Activated CD8-positive, alpha-beta T cell treated with anti-CD3 and anti-CD28 coated beads for 36 hours (primary cell): ENCODE measurements at regions of chr20 and their contacts with region 1.

Region 1: DNA sequence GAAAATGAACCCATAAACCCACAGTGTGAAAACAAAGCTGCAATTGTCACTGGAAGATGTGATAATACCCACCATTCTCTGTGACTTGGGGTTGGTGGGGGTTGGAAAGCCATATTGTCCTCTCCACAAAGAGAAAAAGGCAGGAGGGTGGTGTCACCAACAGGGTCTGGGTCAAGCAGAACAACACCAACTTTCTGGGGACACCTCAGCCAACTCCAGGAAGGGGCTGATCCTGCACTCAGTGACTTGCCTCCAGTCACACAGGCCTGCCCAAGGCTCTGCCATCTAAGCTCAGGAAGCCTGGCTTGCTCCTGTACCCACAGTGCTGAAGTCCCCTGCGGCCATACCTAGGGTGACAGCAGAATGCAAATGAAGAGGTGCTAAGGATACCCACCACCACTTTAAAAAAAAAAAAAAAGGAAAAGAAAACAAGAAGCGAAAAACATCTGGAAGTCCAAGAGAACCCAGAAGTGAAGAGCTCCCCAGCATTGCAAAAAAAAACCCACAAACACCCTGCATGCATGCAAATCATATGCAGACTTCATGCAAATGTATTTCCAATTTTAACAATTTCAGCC is 110.6 kb downstream of the PREX1 start:
- DNase-seq: peak; percentile 38
- ATAC-seq: peak; percentile 8
- H3K4me3 Mint-ChIP-seq: peak overlapping the region; percentile 20
- H3K27ac Mint-ChIP-seq: peak overlapping the region; percentile 99
- H3K4me1 Mint-ChIP-seq: peaks cover 88% of the 10 kb centered on the region
- H3K27me3 Mint-ChIP-seq: no peaks in the 10 kb centered on the region
- CTCF ChIP-seq: no peak

Region 2: GRCh38 chr20:48463403-48464319 is 253.5 kb before region 1 on chr20:
- CTCF ChIA-PET with region 1: no interaction called
- POLR2A ChIA-PET with region 1: no interaction called
- intact Hi-C with region 1: no loop called
- DNase-seq: no peak
- ATAC-seq: no peak
- H3K4me3 Mint-ChIP-seq: no peak overlapping the region
- H3K27ac Mint-ChIP-seq: no peak overlapping the region
- H3K4me1 Mint-ChIP-seq: no peaks in the 10 kb centered on the region
- H3K27me3 Mint-ChIP-seq: peaks cover 1% of the 10 kb centered on the region
- CTCF ChIP-seq: no peak

Region 3: DNA sequence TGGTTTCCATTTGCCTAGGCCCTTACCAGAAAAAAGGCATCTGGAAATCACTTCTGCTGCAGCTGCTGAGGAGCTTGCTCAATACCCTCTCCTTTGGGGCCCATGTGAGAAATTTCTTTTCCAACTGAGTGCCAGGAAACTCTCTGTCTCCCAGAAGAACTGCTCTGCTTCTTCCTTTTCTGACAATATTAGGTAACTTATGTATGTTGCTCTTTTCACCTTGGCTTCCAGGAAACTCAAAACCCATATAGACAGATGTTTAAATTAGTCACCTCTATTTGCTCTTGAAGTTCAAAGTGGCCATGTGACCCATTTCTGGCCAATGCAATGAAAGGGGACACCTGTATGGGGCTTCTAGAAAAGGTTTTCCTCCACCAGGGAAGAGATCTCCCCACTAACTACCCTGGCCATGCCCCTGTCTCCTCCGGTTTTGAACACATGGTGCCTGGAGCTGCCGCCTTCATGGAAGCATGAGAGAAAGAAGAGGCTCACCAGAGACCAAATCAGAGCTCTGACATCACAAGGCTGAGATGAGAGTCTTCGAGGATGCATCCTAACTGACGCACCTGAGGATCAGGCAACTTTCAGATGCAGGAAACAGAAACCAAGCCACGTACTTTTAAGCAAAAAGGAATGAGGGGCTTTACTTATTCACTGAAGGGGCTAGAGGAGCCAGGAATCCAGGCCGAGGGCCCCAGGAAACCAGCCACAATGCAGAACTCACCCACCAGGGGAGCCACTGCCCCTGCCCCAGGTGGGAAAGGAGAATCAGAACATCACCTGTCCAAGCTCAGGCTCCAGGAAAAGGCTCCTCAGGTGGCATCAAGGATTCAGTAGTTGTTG is 10.8 kb before region 1 on chr20:
- CTCF ChIA-PET with region 1: interaction called, 10 read pairs
- POLR2A ChIA-PET with region 1: interaction called, 16 read pairs
- intact Hi-C with region 1: no loop called
- DNase-seq: no peak
- ATAC-seq: peak; percentile 59
- H3K4me3 Mint-ChIP-seq: no peak overlapping the region
- H3K27ac Mint-ChIP-seq: peak overlapping the region; percentile 62
- H3K4me1 Mint-ChIP-seq: peaks cover 42% of the 10 kb centered on the region
- H3K27me3 Mint-ChIP-seq: no peaks in the 10 kb centered on the region
- CTCF ChIP-seq: no peak

Region 4: GRCh38 chr20:48787861-48788375 is 70.7 kb after region 1 on chr20:
- CTCF ChIA-PET with region 1: no interaction called
- POLR2A ChIA-PET with region 1: interaction called, 5 read pairs
- intact Hi-C with region 1: loop called (anchors 2 kb)
- DNase-seq: no peak
- ATAC-seq: peak; percentile 18
- H3K4me3 Mint-ChIP-seq: no peak overlapping the region
- H3K27ac Mint-ChIP-seq: peak overlapping the region; percentile 66
- H3K4me1 Mint-ChIP-seq: peaks cover 54% of the 10 kb centered on the region
- H3K27me3 Mint-ChIP-seq: no peaks in the 10 kb centered on the region
- CTCF ChIP-seq: no peak